Left colon (tissue), 2 donors: ENCODE measurements at regions of chr6 and their contacts with region 1.

Region 1: GRCh38 chr6:33082702-33083101 is 6.9 kb downstream of the HLA-DPB1 start:
- DNase-seq: peak in 1 of 2 donors; percentile 51
- ATAC-seq: no peak

Region 2: GRCh38 chr6:33014841-33015634 is 67.7 kb before region 1 on chr6:
- intact Hi-C with region 1: loop called in 1 of 2 experiments (anchors 10 kb)
- DNase-seq: no peak
- ATAC-seq: peak; percentile 69

Region 3: DNA sequence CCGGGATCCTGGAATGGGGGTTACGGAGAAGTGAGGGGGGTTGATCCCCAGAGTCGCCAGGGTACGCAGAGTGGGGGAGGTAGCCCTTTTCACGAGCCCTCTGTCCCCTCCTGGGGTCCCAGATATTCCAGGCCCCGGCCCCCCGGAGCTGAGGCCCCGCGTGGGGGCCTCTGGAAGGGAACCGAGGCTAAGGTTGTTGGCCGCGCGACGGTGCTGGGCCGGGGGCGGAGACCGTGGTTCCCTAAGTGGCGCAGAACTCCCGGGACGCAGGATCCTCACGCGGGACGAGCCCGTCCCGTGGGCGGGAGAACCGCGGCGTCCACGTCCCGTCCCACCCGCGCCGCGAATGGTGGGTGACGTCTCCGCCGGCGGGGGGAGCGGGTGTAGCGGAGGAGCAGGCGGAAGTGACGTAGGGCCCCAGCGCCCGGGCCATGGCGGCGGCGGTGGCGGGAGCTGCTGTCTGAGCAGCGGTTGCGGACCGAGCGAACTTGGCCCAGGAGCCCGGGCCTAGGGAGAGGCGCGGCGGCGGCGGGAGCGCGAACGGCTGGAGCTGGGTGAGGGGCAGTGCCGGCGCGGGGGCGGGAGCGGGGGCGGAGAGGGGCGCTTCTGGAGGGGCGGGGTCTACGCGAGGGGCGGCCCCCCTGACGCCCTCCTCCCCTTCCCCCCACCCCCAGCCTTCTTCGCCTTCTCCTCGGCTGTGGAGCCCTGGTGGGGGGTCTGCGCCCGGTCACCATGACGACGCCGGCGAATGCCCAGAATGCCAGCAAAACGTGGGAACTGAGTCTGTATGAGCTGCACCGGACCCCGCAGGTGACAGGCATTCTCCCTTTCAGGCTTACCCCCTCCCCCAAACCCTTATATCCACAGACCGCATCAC is 125.6 kb after region 1 on chr6 and contains the start of gene RING1:
- intact Hi-C with region 1: no loop called
- DNase-seq: peak; percentile 84 to 93
- ATAC-seq: peak; percentile 75
- total RNA-seq, gene RING1: 27.4 to 29.7 TPM